CD8-positive, alpha-beta T cell (primary cell): ENCODE measurements at regions of chr1 and their contacts with region 1.

Region 1: DNA sequence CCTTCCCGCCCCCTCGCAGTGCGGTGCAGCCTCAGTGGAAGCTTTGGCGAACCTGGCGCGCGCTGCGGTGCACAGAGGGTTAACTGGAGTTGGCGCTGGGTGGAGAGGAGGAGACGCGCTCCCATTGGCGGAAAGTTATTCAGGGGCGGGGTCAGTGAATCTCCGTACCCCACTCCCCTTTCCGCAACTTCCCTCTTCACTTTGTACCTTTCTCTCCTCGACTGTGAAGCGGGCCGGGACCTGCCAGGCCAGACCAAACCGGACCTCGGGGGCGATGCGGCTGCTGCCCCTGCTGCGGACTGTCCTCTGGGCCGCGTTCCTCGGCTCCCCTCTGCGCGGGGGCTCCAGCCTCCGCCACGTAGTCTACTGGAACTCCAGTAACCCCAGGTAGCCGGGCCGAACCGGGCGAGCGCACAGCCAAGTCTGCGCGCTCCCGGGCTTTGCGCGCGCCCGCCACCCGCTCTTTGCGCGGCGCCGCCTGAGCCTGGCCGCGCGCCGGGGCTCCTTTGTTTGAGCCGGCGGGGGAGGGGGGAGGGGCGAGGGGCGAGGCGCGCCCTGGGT is at the start of gene EFNA4:
- DNase-seq: peak; percentile 59 to 92 (median 83)
- ATAC-seq: peak; percentile 87
- H3K4me3 ChIP-seq: peak within 1 kb of the TSS; percentile 79 to 85
- H3K4me3 Mint-ChIP-seq: peak within 1 kb of the TSS; percentile 88
- H3K27ac ChIP-seq: peak within 1 kb of the TSS in 1 of 2 experiments; percentile 34
- H3K27ac Mint-ChIP-seq: peak within 1 kb of the TSS; percentile 77
- H3K4me1 ChIP-seq: peaks cover 33% of the 10 kb centered on the region
- H3K4me1 Mint-ChIP-seq: peaks cover 36% of the 10 kb centered on the region
- H3K27me3 ChIP-seq: no peaks in the 10 kb centered on the region
- H3K27me3 Mint-ChIP-seq: no peaks in the 10 kb centered on the region
- CTCF ChIP-seq: no peak
- total RNA-seq, gene EFNA4: 1.4 to 1.8 TPM

Region 2: GRCh38 chr1:154479764-154480421 is 583.7 kb before region 1 on chr1:
- CTCF ChIA-PET with region 1: no interaction called
- POLR2A ChIA-PET with region 1: no interaction called
- intact Hi-C with region 1: loop called in 1 of 2 experiments (anchors 5 kb)
- DNase-seq: peak in 8 of 9 experiments; percentile 12 to 80 (median 58)
- ATAC-seq: peak; percentile 91
- H3K4me3 ChIP-seq: no peak overlapping the region
- H3K4me3 Mint-ChIP-seq: no peak overlapping the region
- H3K27ac ChIP-seq: no peak overlapping the region
- H3K27ac Mint-ChIP-seq: no peak overlapping the region
- H3K4me1 ChIP-seq: peaks cover 3% of the 10 kb centered on the region
- H3K4me1 Mint-ChIP-seq: peaks cover 9% of the 10 kb centered on the region
- H3K27me3 ChIP-seq: no peaks in the 10 kb centered on the region
- H3K27me3 Mint-ChIP-seq: peaks cover 3% of the 10 kb centered on the region
- CTCF ChIP-seq: peak; percentile 98

Region 3: GRCh38 chr1:154936555-154937084 is 127.0 kb before region 1 on chr1 and contains the start of gene PMVK:
- CTCF ChIA-PET with region 1: interaction called, 3 read pairs
- POLR2A ChIA-PET with region 1: no interaction called
- intact Hi-C with region 1: loop called in 1 of 2 experiments (anchors 2 kb)
- DNase-seq: peak; percentile 89 to 98 (median 96)
- ATAC-seq: peak; percentile 85
- H3K4me3 ChIP-seq: peak within 1 kb of the TSS; percentile 87 to 90
- H3K4me3 Mint-ChIP-seq: peak within 1 kb of the TSS; percentile 97
- H3K27ac ChIP-seq: peak within 1 kb of the TSS; percentile 94 to 97
- H3K27ac Mint-ChIP-seq: peak within 1 kb of the TSS; percentile 99
- H3K4me1 ChIP-seq: peaks cover 32% of the 10 kb centered on the region
- H3K4me1 Mint-ChIP-seq: peaks cover 49% of the 10 kb centered on the region
- H3K27me3 ChIP-seq: no peaks in the 10 kb centered on the region
- H3K27me3 Mint-ChIP-seq: no peaks in the 10 kb centered on the region
- CTCF ChIP-seq: no peak
- total RNA-seq, gene PMVK: 6.7 to 7.3 TPM

Region 4: GRCh38 chr1:154961497-154962262 is 102.0 kb before region 1 on chr1 and contains the start of gene PYGO2:
- CTCF ChIA-PET with region 1: interaction called, 5 read pairs
- POLR2A ChIA-PET with region 1: no interaction called
- intact Hi-C with region 1: loop called (anchors 2 to 5 kb)
- DNase-seq: peak; percentile 62 to 90 (median 80)
- ATAC-seq: peak; percentile 75
- H3K4me3 ChIP-seq: peak within 1 kb of the TSS; percentile 68 to 96
- H3K4me3 Mint-ChIP-seq: peak within 1 kb of the TSS; percentile 91
- H3K27ac ChIP-seq: peak within 1 kb of the TSS; percentile 91 to 95
- H3K27ac Mint-ChIP-seq: peak within 1 kb of the TSS; percentile 93
- H3K4me1 ChIP-seq: peaks cover 27% of the 10 kb centered on the region
- H3K4me1 Mint-ChIP-seq: peaks cover 42% of the 10 kb centered on the region
- H3K27me3 ChIP-seq: no peaks in the 10 kb centered on the region
- H3K27me3 Mint-ChIP-seq: no peaks in the 10 kb centered on the region
- CTCF ChIP-seq: peak; percentile 69
- total RNA-seq, gene PYGO2: 25.1 to 26.7 TPM

Region 5: GRCh38 chr1:155017041-155017945 is 46.3 kb before region 1 on chr1:
- CTCF ChIA-PET with region 1: interaction called, 10 read pairs
- POLR2A ChIA-PET with region 1: no interaction called
- intact Hi-C with region 1: loop called in 1 of 2 experiments (anchors 2 kb)
- DNase-seq: peak; percentile 71 to 92 (median 88)
- ATAC-seq: peak; percentile 98
- H3K4me3 ChIP-seq: peak overlapping the region; percentile 31 to 46
- H3K4me3 Mint-ChIP-seq: peak overlapping the region; percentile 59
- H3K27ac ChIP-seq: no peak overlapping the region
- H3K27ac Mint-ChIP-seq: no peak overlapping the region
- H3K4me1 ChIP-seq: peaks cover 55% of the 10 kb centered on the region
- H3K4me1 Mint-ChIP-seq: peaks cover 44% of the 10 kb centered on the region
- H3K27me3 ChIP-seq: no peaks in the 10 kb centered on the region
- H3K27me3 Mint-ChIP-seq: no peaks in the 10 kb centered on the region
- CTCF ChIP-seq: peak; percentile 99

Region 6: GRCh38 chr1:155050560-155051341 is 12.9 kb before region 1 on chr1 and contains the start of gene ADAM15:
- CTCF ChIA-PET with region 1: interaction called, 528 read pairs
- POLR2A ChIA-PET with region 1: interaction called, 6 read pairs
- intact Hi-C with region 1: loop called (anchors 1 kb)
- DNase-seq: peak; percentile 64 to 88 (median 80)
- ATAC-seq: peak; percentile 83
- H3K4me3 ChIP-seq: peak within 1 kb of the TSS; percentile 86 to 94
- H3K4me3 Mint-ChIP-seq: peak within 1 kb of the TSS; percentile 86
- H3K27ac ChIP-seq: peak within 1 kb of the TSS; percentile 45 to 65
- H3K27ac Mint-ChIP-seq: peak within 1 kb of the TSS; percentile 85
- H3K4me1 ChIP-seq: peaks cover 27% of the 10 kb centered on the region
- H3K4me1 Mint-ChIP-seq: peaks cover 19% of the 10 kb centered on the region
- H3K27me3 ChIP-seq: no peaks in the 10 kb centered on the region
- H3K27me3 Mint-ChIP-seq: no peaks in the 10 kb centered on the region
- CTCF ChIP-seq: peak; percentile 99
- total RNA-seq, gene ADAM15: 10.8 to 11.8 TPM

Region 7: DNA sequence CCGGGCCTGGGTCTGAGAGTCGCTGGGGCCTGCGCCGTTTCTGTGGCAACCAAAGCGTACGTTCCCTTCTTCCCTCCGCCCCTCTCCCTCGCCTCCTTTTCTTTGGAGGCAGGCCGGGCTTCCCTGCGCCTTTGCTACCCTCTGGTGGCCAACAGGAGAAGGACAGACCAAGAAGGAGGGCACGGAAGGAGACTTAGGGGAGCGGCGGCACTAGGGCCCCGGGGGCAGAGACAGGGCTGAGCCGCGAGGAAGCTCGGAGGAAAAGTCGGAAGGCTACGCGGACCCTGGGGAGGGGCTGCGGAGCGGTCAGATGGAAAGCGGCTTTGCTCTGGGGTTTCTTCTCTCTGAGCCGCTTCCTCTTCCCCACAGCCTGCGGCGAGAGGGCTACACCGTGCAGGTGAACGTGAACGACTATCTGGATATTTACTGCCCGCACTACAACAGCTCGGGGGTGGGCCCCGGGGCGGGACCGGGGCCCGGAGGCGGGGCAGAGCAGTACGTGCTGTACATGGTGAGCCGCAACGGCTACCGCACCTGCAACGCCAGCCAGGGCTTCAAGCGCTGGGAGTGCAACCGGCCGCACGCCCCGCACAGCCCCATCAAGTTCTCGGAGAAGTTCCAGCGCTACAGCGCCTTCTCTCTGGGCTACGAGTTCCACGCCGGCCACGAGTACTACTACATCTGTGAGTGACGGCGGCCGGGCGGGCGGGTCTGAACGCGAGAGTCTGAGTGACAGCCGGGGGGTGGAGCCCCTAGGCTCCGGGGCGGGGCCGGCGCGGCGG is 21.3 kb after region 1 on chr1:
- CTCF ChIA-PET with region 1: interaction called, 219 read pairs
- POLR2A ChIA-PET with region 1: interaction called, 14 read pairs
- intact Hi-C with region 1: loop called (anchors 1 kb)
- DNase-seq: peak; percentile 80 to 94 (median 92)
- ATAC-seq: peak; percentile 73
- H3K4me3 ChIP-seq: peak overlapping the region; percentile 82 to 92
- H3K4me3 Mint-ChIP-seq: peak overlapping the region; percentile 95
- H3K27ac ChIP-seq: peak overlapping the region; percentile 57 to 85
- H3K27ac Mint-ChIP-seq: peak overlapping the region; percentile 90
- H3K4me1 ChIP-seq: peaks cover 54% of the 10 kb centered on the region
- H3K4me1 Mint-ChIP-seq: peaks cover 39% of the 10 kb centered on the region
- H3K27me3 ChIP-seq: peaks cover 39 to 44% of the 10 kb centered on the region in 2 experiments
- H3K27me3 Mint-ChIP-seq: peaks cover 30% of the 10 kb centered on the region
- CTCF ChIP-seq: peak; percentile 84

Region 8: DNA sequence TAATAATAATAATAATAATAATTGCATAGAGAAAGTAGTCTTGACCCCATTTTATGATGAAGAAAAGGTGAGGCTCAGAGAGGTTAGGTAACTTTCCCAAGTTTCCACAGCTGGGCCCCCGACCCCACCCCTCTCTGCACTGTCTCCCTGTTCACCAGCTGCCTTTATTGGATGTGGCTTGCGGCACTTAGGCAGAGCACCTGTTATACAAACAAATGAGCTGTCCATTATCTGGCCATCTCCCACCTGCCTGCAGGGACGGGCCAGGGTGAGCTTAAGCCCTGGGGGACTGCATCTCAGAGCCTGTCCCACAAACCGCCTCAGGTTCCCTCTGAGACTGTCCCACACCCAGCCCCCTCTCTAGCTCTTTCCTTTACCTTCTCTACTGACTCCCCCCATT is 54.0 kb after region 1 on chr1:
- CTCF ChIA-PET with region 1: no interaction called
- POLR2A ChIA-PET with region 1: no interaction called
- intact Hi-C with region 1: no loop called
- DNase-seq: no peak
- ATAC-seq: no peak
- H3K4me3 ChIP-seq: no peak overlapping the region
- H3K4me3 Mint-ChIP-seq: no peak overlapping the region
- H3K27ac ChIP-seq: no peak overlapping the region
- H3K27ac Mint-ChIP-seq: no peak overlapping the region
- H3K4me1 ChIP-seq: no peaks in the 10 kb centered on the region
- H3K4me1 Mint-ChIP-seq: no peaks in the 10 kb centered on the region
- H3K27me3 ChIP-seq: peaks cover 0 to 2% of the 10 kb centered on the region in 2 experiments
- H3K27me3 Mint-ChIP-seq: peaks cover 3% of the 10 kb centered on the region
- CTCF ChIP-seq: no peak